ENCODE measurements at regions of chr12 and their contacts with region 1.

Region 1: DNA sequence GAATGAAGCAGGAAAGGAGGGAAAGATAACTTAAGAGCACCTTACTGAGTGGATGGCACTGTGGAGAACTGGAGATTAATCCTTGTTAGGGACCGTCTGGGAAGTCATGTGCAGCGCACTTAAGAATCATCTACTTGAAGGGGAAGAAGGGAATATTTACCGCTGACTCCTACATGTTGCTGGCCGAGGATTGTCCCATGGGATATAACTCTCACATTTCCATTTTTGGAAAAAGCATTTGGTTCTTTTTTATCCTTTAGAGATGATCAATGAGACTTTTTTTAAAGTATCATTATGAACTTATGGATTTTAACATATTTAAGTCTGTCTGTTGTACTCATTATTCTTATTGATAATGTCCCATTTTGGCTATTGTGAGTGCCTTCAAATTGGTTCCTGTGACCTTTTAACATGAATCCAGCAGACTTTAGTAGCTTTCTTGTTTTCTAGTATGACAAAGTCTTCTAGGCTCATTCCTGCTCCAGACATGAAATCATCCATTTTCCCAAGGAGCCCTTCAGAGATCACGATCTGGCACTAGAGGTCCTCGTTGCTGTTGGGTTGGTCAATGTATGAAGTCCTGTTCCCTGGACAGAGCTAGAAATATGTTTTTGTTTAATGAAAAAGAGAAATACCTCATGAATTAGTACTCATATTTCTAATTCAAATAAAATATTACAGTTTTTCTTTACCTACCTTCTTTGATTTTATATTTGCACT is 20.2 kb upstream of the FAM234B start:
- DNase-seq: peak; percentile 81
- H3K4me3 ChIP-seq: no peak overlapping the region
- H3K27ac ChIP-seq: no peak overlapping the region
- H3K4me1 ChIP-seq: no peaks in the 10 kb centered on the region
- H3K27me3 ChIP-seq: no peaks in the 10 kb centered on the region
- CTCF ChIP-seq: peak; percentile 55 to 63
- POLR2A ChIP-seq: no peak

Region 2: GRCh38 chr12:13233830-13234641 is 210.1 kb after region 1 on chr12:
- CTCF ChIA-PET with region 1: no interaction called
- POLR2A ChIA-PET with region 1: no interaction called
- dilution Hi-C with region 1: no loop called
- intact Hi-C with region 1: loop called (anchors 1 kb)
- DNase-seq: peak; percentile 77
- H3K4me3 ChIP-seq: no peak overlapping the region
- H3K27ac ChIP-seq: no peak overlapping the region
- H3K4me1 ChIP-seq: peaks cover 3% of the 10 kb centered on the region
- H3K27me3 ChIP-seq: no peaks in the 10 kb centered on the region
- CTCF ChIP-seq: peak; percentile 70 to 83
- POLR2A ChIP-seq: no peak